ENCODE measurements at regions of chr6 and their contacts with region 1.

Region 1: DNA sequence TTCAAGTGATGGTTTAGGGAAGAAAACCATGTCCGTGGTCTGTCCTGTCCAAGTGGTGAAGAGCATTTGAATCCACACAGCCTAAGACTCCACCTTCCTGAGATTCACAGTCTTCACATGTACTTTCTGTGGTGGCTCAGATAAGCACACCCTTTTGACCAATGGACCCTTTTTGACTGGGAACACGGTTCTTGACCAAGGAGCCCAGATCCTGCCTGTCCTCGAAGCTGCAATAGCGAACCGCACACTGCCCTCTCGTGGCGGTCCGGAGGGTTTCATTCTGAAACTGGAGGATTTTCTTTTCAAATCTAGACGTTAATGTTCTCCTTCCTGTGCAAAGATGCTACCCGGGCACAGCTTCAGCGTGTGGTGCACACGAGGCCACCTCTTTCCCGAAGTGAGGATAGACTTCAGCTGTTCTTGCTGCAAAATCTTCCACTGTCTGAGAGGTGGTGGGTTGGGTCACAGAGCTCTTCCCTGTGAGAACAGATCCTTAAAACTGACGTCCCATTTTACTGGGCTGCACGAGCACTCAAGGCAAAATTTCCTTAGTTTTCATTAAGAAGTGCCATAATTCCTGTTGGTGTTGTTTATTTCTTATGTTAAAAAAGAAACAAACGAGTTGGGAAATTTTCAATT is 90.5 kb downstream of the SYNJ2 start:
- DNase-seq: peak; percentile 28 to 68 (median 42)
- H3K4me3 ChIP-seq: no peak overlapping the region
- H3K4me3 Mint-ChIP-seq: no peak overlapping the region
- H3K27ac ChIP-seq: no peak overlapping the region
- H3K27ac Mint-ChIP-seq: peak overlapping the region in 3 of 8 donors; percentile 66 to 82 (median 71)
- H3K4me1 ChIP-seq: peaks cover 7% of the 10 kb centered on the region
- H3K4me1 Mint-ChIP-seq: peaks cover 12 to 19% (median 13%) of the 10 kb centered on the region in 3 donors
- H3K27me3 ChIP-seq: no peaks in the 10 kb centered on the region
- H3K27me3 Mint-ChIP-seq: peaks cover 0 to 2% of the 10 kb centered on the region in 2 donors

Region 2: GRCh38 chr6:157756708-157757429 is 315.3 kb before region 1 on chr6:
- CTCF ChIA-PET with region 1: interaction called, 18 read pairs
- POLR2A ChIA-PET with region 1: no interaction called
- DNase-seq: peak; percentile 63 to 82 (median 69)
- H3K4me3 ChIP-seq: no peak overlapping the region
- H3K4me3 Mint-ChIP-seq: peak overlapping the region in 3 of 7 donors; percentile 20 to 41 (median 28)
- H3K27ac ChIP-seq: no peak overlapping the region
- H3K27ac Mint-ChIP-seq: peak overlapping the region in 5 of 8 donors; percentile 7 to 89 (median 64)
- H3K4me1 ChIP-seq: peaks cover 41% of the 10 kb centered on the region
- H3K4me1 Mint-ChIP-seq: peaks cover 26 to 64% (median 42%) of the 10 kb centered on the region in 3 donors
- H3K27me3 ChIP-seq: no peaks in the 10 kb centered on the region
- H3K27me3 Mint-ChIP-seq: peaks cover 23 to 25% of the 10 kb centered on the region in 2 donors

Region 3: DNA sequence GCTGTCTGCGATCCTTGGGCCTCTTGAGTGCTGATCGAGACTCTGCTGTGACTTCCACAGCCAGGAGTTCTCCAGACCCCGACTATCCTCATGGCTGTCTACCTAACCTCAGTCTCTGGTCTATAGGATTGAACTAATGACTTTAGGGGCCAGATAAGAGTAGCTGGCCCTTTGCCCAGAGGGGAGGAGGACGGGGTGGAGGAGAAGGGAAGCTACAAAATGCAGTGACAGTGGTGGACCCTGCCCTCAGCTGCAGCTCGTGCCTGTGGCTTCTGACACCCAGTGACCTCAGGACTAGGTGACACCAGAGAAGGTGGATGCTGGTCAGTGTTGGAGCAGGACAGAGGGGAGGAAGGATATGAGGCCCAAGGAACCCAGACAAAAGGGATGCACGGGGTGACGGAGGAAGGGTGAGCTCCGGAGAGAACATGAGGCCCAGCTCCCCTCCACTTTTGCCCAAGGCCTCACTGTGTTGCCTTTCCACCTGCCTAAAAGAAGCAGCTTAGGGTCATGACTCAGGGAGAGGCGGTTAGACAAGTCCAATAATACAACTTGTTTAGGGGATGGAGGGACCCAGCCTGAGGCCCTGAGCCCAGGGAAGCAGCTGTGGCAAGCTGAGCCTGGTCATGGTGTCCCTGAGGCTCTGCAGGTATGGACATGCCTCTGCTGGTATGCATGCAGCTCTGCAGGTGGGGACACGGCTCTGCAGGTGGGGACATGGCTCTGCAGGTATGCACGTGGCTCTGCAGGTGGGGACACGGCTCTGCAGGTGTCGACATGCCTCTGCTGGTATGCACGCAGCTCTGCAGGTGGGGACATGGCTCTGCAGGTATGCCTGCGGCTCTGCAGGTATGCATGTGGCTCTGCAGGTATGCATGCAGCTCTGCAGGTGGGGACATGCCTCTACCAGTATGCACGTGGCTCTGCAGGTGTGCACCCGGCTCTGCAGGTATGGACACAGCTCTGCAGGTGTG is 22.9 kb before region 1 on chr6:
- CTCF ChIA-PET with region 1: interaction called, 10 read pairs
- POLR2A ChIA-PET with region 1: no interaction called
- DNase-seq: no peak
- H3K4me3 ChIP-seq: no peak overlapping the region
- H3K4me3 Mint-ChIP-seq: no peak overlapping the region
- H3K27ac ChIP-seq: no peak overlapping the region
- H3K27ac Mint-ChIP-seq: no peak overlapping the region
- H3K4me1 ChIP-seq: peaks cover 17% of the 10 kb centered on the region
- H3K4me1 Mint-ChIP-seq: peaks cover 14 to 17% (median 16%) of the 10 kb centered on the region in 3 donors
- H3K27me3 ChIP-seq: no peaks in the 10 kb centered on the region
- H3K27me3 Mint-ChIP-seq: no peaks in the 10 kb centered on the region

Region 4: DNA sequence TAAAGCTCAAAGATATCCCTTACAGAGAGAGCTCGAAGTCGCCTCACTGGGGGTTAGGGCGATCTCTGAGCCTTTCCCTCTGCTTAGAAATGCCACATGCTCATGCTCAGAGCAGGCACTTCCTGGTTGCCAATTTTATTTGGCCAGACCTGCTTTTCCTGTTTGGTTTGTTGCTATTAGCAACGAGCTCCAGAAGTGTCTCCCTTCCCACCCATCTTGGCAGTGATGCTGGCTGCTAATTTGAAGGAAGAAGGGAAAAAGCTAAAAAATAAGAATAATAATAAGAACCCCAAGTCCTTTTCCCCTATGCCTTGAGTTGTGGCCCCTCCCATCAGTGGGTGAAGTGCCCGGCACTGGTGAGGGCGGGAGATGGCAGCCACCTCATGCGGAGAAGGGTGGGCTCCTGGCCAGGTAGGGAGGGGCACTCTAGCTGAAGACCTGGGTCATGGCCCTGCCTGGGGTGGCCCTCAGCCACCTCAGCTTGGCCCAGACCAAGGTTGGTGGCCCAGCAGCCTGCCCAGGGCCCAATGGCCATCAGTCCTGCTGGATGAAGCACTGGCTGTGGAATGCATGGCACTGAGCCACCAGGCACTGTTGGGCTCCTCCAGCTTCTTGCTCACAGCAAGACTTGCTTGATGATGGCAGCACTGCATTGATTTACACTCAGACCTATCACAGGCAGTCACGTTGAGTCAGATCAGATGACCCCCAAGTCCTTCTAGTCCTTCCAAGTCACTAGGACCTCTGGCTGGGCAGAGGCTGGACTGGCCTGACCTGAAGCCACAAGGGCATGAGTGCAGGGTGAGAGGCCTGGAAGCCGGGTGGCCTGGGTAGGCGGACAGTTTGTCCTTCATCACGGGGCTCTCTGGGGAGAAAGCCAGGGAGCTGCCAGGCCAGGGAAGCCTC is 11.5 kb before region 1 on chr6:
- CTCF ChIA-PET with region 1: interaction called, 33 read pairs
- POLR2A ChIA-PET with region 1: no interaction called
- DNase-seq: peak in 2 of 5 donors; percentile 6 to 39
- H3K4me3 ChIP-seq: no peak overlapping the region
- H3K4me3 Mint-ChIP-seq: no peak overlapping the region
- H3K27ac ChIP-seq: no peak overlapping the region
- H3K27ac Mint-ChIP-seq: peak overlapping the region in 3 of 8 donors; percentile 57 to 87 (median 70)
- H3K4me1 ChIP-seq: peaks cover 31% of the 10 kb centered on the region
- H3K4me1 Mint-ChIP-seq: peaks cover 19 to 20% (median 20%) of the 10 kb centered on the region in 3 donors
- H3K27me3 ChIP-seq: no peaks in the 10 kb centered on the region
- H3K27me3 Mint-ChIP-seq: no peaks in the 10 kb centered on the region

Region 5: GRCh38 chr6:158086504-158087223 is 14.5 kb after region 1 on chr6:
- CTCF ChIA-PET with region 1: interaction called, 22 read pairs
- POLR2A ChIA-PET with region 1: no interaction called
- DNase-seq: no peak
- H3K4me3 ChIP-seq: no peak overlapping the region
- H3K4me3 Mint-ChIP-seq: no peak overlapping the region
- H3K27ac ChIP-seq: no peak overlapping the region
- H3K27ac Mint-ChIP-seq: no peak overlapping the region
- H3K4me1 ChIP-seq: no peaks in the 10 kb centered on the region
- H3K4me1 Mint-ChIP-seq: no peaks in the 10 kb centered on the region
- H3K27me3 ChIP-seq: no peaks in the 10 kb centered on the region
- H3K27me3 Mint-ChIP-seq: no peaks in the 10 kb centered on the region

Region 6: DNA sequence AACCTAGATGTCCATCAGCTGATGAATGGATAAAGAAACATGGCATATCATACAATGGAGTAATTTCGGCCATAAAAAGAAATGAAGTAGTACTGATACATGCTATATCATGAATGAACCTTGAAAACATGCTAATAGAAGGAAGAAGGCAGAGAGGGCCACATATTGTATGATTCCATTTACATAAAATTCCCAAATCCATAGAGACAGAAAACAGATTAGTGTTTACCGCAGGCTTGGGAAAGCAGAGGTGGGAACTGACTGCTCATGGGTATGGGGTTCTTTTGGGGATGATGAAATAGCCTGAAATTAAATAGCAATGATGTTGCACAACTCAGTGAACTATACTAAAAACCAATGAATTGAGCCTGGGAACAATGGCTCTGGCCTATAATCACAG is 37.5 kb after region 1 on chr6:
- CTCF ChIA-PET with region 1: no interaction called
- POLR2A ChIA-PET with region 1: no interaction called
- DNase-seq: no peak
- H3K4me3 ChIP-seq: no peak overlapping the region
- H3K4me3 Mint-ChIP-seq: no peak overlapping the region
- H3K27ac ChIP-seq: no peak overlapping the region
- H3K27ac Mint-ChIP-seq: peak overlapping the region in 1 of 8 donors; percentile 3
- H3K4me1 ChIP-seq: no peaks in the 10 kb centered on the region
- H3K4me1 Mint-ChIP-seq: no peaks in the 10 kb centered on the region
- H3K27me3 ChIP-seq: no peaks in the 10 kb centered on the region
- H3K27me3 Mint-ChIP-seq: no peaks in the 10 kb centered on the region

Region 7: GRCh38 chr6:158660333-158660754 is 588.1 kb after region 1 on chr6:
- CTCF ChIA-PET with region 1: no interaction called
- POLR2A ChIA-PET with region 1: no interaction called
- DNase-seq: peak in 4 of 5 donors; percentile 19 to 69 (median 59)
- H3K4me3 ChIP-seq: no peak overlapping the region
- H3K4me3 Mint-ChIP-seq: peak overlapping the region in 5 of 7 donors; percentile 8 to 48 (median 43)
- H3K27ac ChIP-seq: no peak overlapping the region
- H3K27ac Mint-ChIP-seq: peak overlapping the region; percentile 47 to 92 (median 83)
- H3K4me1 ChIP-seq: peaks cover 29% of the 10 kb centered on the region
- H3K4me1 Mint-ChIP-seq: peaks cover 21 to 48% (median 38%) of the 10 kb centered on the region in 3 donors
- H3K27me3 ChIP-seq: no peaks in the 10 kb centered on the region
- H3K27me3 Mint-ChIP-seq: no peaks in the 10 kb centered on the region

Measured in CD8-positive, alpha-beta memory T cell (primary cell).